ENCODE measurements at regions of chr21 and their contacts with region 1.

Region 1: DNA sequence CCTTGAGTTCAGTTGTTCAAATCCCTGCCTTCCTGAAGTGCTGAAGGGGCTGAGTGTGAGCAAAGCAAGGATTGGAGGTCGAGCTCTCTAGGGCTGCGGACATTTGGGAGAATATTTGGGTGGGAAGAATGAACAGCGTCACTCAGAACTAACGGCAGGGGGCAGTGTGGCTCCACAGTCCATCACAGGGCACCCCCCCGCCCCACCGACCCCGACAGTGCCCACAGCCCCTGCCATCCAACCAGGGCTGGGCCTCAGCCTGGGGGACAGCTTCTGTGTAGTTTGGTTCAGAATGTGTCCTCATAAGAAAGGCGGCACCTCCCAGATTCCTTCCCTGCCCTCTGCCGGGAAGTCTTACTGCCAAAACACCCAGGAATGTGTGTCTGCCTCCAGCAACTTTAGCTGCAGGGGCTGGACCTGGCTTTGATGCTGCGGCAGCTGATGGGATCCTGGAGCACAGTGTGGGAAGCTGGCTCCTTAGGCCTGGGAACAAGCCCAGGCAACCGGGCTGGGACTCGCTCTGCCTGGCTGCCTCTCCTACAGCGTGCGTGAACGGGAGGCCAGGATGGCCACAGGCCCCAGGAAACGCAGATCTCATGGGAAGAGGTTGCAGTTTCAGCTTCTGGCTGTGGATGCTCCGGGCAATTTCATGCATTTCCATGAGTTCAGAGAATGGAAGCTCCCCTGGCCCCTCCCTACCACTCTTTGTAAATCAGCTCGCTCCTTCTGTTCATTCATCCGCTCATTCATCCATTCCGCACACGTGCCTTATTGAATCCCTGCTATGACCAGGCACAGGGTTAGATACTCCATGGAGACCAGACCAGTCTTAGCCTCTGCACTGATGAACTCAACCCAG is 104.9 kb upstream of the TMPRSS2 start:
- DNase-seq: peak; percentile 65
- ATAC-seq: peak; percentile 84 to 89
- H3K4me3 ChIP-seq: no peak overlapping the region
- H3K27ac ChIP-seq: peak overlapping the region; percentile 61
- H3K4me1 ChIP-seq: peaks cover 23% of the 10 kb centered on the region
- H3K27me3 ChIP-seq: no peaks in the 10 kb centered on the region
- CTCF ChIP-seq: peak; percentile 73

Region 2: GRCh38 chr21:41777951-41778874 is 165.3 kb after region 1 on chr21:
- intact Hi-C with region 1: loop called (anchors 10 kb)
- DNase-seq: peak; percentile 89
- ATAC-seq: peak; percentile 93 to 94
- H3K4me3 ChIP-seq: no peak overlapping the region
- H3K27ac ChIP-seq: no peak overlapping the region
- H3K4me1 ChIP-seq: peaks cover 8% of the 10 kb centered on the region
- H3K27me3 ChIP-seq: peaks cover 38% of the 10 kb centered on the region
- CTCF ChIP-seq: peak; percentile 95

Measured in lower lobe of right lung (tissue), 2 donors.